ENCODE measurements at regions of chr6 and their contacts with region 1.

Region 1: GRCh38 chr6:11366183-11366933 is 133.9 kb upstream of the NEDD9 start:
- DNase-seq: peak; percentile 60
- H3K4me3 Mint-ChIP-seq: peak overlapping the region; percentile 55
- H3K27ac Mint-ChIP-seq: peak overlapping the region; percentile 92
- H3K4me1 Mint-ChIP-seq: peaks cover 95% of the 10 kb centered on the region
- H3K27me3 Mint-ChIP-seq: no peaks in the 10 kb centered on the region

Region 2: DNA sequence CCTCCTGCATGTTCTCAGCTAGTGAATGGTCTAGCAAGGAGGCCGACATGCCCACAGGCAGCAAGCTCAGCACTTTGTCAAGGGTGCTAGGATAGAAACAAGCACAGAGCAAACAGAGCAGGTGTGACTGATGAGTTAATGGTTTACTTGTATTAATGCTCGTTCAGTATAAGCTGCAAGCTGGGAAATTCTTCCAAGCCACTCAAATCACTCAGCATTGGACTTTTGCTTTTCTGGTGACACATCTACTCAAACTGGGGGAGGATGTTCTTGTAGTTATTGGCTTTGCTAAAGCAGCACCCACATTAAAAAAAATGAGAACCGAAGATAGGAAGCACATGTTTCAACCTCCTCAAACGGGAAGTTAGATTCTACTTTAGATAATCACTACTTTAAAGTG is 90.8 kb before region 1 on chr6:
- intact Hi-C with region 1: loop called (anchors 1 kb)
- DNase-seq: no peak
- H3K4me3 Mint-ChIP-seq: peak overlapping the region; percentile 0
- H3K27ac Mint-ChIP-seq: peak overlapping the region; percentile 41
- H3K4me1 Mint-ChIP-seq: peaks cover 43% of the 10 kb centered on the region
- H3K27me3 Mint-ChIP-seq: no peaks in the 10 kb centered on the region

Region 3: DNA sequence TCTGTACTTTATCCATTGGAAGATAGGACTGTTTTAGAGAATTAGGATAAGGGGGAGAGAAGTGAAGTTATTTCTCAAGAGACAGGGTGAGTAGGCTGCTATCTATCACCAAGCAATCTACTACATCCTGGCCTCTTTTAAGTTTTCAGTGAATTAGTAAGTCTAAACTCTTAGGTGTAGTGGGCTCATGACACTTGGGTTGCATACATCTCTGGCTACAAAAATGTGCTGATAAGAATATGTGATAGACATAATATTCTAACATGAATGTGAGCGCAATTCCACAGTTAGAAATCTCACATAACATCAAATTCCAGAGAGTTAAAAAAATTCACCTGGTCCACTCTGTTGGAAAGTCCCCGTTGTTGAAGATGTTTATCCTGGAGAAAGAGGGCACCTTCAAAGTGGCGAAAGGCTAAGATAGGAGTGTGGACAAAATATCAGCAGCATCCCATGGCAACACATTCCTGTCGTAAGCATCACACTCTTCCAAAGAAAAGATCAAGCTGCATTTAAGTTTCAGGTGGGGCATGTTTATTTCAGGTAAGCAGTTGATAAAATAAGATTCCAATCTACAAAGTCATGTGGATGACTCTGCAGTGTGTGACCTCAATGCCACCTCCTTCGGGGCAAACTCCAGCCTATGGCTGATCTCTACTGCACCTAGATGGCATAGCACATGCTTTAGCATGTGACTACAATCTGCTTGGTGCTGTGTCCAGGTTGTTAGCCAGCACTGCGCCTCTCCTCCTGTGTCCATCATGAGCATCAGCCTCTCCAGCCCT is 22.2 kb before region 1 on chr6:
- intact Hi-C with region 1: loop called (anchors 1 kb)
- DNase-seq: no peak
- H3K4me3 Mint-ChIP-seq: peak overlapping the region; percentile 4
- H3K27ac Mint-ChIP-seq: peak overlapping the region; percentile 61
- H3K4me1 Mint-ChIP-seq: peaks cover 90% of the 10 kb centered on the region
- H3K27me3 Mint-ChIP-seq: no peaks in the 10 kb centered on the region

Region 4: DNA sequence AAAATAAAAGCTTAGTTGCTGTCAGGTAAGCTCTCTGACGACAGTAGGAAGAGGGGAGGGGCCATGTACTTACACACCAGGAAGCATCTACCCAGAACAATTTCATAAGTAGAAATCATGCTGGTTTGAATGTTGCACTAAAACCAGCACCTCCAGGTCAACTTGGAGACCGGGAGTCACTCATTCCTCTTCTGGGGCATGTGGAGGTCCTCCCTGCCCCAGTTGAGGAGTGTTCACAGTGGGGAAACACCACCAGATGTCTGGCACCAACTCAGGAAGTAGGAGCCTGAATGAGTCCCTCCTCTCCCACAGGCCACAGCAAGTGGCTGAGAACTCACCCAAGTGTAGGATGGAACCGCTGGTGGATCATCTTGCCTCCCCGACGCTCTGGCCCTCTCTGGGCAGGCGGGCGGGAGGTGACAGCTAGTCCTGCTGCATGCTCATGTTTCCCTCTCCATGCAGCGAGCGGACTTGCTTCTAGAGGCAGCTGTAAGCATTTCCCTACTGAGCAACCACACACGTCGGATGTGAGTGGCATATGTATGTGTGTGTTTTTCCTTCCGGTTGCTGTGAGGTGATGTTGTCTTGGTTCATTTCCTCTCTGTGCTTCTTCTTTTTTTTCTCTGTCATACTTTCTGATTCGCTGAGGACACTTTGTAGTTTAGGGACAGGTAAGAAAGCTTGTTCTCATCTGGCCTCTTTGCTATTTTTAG is 15.6 kb after region 1 on chr6:
- intact Hi-C with region 1: loop called (anchors 1 kb)
- DNase-seq: peak; percentile 69
- H3K4me3 Mint-ChIP-seq: peak overlapping the region; percentile 92
- H3K27ac Mint-ChIP-seq: peak overlapping the region; percentile 96
- H3K4me1 Mint-ChIP-seq: peaks cover 75% of the 10 kb centered on the region
- H3K27me3 Mint-ChIP-seq: no peaks in the 10 kb centered on the region

Region 5: GRCh38 chr6:11460001-11460668 is 93.8 kb after region 1 on chr6:
- intact Hi-C with region 1: loop called (anchors 1 kb)
- DNase-seq: no peak
- H3K4me3 Mint-ChIP-seq: peak overlapping the region; percentile 61
- H3K27ac Mint-ChIP-seq: peak overlapping the region; percentile 88
- H3K4me1 Mint-ChIP-seq: peaks cover 33% of the 10 kb centered on the region
- H3K27me3 Mint-ChIP-seq: no peaks in the 10 kb centered on the region

Region 6: DNA sequence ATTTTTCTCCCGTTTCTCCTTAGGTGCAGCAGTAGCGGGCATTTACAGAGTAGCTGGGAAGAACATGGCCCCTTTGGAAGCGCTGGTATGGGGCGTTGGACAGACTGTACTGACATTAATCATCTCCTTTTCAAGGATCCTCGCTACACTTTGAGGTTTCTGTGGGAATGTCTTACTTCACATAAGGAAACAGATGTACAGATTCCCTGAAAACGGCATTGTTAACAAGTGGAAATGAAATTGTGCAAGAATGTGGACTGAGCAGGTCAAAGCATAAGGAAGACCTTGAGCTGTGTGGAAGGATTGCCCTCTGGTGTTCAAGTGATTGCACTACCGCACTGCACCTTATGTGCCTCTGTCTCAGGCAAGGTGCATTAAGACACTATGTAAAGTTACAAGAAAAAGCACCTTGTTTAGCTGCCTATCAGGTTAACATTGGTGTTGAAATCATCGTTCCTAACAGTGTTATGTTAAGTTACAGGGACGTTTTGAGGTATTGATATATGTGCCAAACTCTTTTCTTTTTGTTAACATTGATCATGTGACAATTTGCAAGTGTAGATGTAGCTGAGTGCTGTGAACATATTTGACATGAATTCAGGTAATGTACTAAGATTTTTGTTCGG is 209.2 kb after region 1 on chr6:
- intact Hi-C with region 1: no loop called
- DNase-seq: peak; percentile 37
- H3K4me3 Mint-ChIP-seq: no peak overlapping the region
- H3K27ac Mint-ChIP-seq: no peak overlapping the region
- H3K4me1 Mint-ChIP-seq: no peaks in the 10 kb centered on the region
- H3K27me3 Mint-ChIP-seq: peaks cover 2% of the 10 kb centered on the region

Region 7: DNA sequence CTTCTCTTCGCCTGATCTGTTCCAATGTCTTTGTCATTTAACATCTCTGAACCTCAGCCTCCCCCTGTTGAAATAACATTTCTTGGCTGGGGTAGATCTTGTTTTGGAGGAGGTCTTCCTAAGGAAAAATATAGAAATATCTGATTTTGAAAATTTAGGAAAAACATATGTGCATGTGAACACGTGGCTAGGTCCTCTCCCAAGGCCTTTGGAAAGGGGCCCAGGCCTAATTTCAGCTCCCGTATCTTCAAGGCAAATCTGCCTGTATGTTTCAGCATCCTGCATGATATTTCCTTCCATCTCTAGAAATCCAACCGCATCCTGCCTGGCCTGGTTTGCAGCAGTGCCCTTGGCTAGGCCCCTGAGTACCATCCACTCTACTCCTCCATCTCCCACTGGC is 1611.4 kb after region 1 on chr6:
- intact Hi-C with region 1: no loop called
- DNase-seq: no peak
- H3K4me3 Mint-ChIP-seq: no peak overlapping the region
- H3K27ac Mint-ChIP-seq: no peak overlapping the region
- H3K4me1 Mint-ChIP-seq: no peaks in the 10 kb centered on the region
- H3K27me3 Mint-ChIP-seq: peaks cover 5% of the 10 kb centered on the region